ENCODE measurements at regions of chr11 and their contacts with region 1.

Region 1: DNA sequence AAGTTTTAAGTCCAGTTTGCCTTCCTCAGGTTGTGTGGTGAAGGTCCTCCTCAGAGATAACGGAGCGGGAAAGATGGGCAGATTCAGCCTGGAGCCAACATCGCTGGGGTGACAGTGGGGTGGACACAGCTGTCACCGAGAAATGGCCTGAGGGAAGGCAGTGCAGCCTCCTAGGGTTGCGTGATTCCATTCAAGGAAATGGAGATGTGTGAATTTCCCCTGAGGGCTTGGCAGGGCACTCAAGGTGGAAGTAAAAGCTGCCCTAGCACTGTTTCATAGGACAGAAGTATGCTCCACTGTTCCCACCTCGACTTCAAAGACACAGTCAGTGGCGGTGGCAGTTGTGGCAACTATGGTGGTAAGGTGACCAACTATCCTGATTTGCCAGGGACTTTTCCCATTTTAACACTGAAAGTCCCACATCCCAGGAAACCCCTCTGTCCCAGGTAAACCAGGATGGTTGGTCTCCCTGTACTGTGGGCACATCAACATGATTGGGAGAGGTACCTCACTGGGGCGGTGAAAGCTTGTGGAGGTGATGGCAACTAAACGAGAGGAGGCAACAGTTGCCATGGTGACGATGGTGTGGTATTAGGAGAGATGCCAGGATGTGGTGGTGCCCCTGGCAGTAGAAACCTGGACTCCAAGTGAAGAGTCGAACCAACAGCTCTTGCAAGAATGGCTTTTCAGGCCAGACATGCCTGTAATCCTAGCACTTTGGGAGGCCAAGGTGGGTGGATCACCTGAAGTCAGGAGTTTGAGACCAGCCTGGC is 15.2 kb upstream of the CAT start:
- H3K4me3 Mint-ChIP-seq: no peak overlapping the region
- H3K27ac Mint-ChIP-seq: peak overlapping the region; percentile 47
- H3K4me1 Mint-ChIP-seq: peaks cover 61% of the 10 kb centered on the region
- H3K27me3 Mint-ChIP-seq: no peaks in the 10 kb centered on the region

Region 2: DNA sequence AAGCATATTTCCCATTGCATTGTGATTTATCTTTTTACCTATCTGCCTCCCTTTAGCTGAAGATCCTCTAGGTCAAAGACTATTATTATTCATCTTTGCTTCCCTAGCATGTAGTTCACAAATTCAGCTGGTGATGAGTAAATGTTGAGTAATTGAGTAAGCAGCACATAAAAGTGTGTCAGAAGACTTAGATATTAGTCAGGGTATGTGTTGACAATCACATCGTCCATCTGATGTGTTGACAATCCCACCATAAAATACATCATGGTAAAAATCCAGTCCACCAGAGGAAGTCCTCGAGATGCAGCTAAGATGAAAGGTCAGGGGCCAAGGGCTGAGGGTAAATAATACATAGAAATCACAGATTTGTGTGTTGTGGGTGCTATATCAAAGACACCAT is 42.8 kb before region 1 on chr11:
- intact Hi-C with region 1: loop called (anchors 5 kb)
- H3K4me3 Mint-ChIP-seq: no peak overlapping the region
- H3K27ac Mint-ChIP-seq: no peak overlapping the region
- H3K4me1 Mint-ChIP-seq: no peaks in the 10 kb centered on the region
- H3K27me3 Mint-ChIP-seq: no peaks in the 10 kb centered on the region

Region 3: DNA sequence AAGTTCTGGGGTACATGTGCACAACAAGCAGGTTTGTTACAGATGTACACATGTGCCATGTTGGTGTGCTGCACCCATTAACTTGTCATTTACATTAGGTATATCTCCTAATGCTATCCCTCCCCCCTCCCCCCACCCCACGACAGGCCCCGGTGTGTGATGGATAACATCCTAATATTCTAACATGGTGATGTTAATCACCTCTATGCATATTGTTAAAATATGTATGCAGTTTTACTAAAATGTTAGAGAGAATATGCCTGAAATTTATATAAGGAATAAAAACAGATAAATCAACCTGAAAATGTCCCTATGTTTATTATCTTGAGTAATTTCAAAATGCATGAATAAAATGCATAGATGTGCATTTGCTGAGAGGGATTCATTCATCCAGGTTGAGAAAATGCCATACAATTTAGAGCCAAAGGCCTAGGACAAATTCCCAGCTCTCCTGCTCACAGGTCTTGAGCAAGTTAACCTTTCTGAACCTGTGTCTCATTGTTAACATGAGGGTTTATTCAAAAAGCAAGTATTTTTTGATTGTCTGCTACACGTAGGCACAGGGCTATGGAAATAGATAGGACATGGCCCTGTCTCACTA is 454.0 kb after region 1 on chr11:
- intact Hi-C with region 1: no loop called
- H3K4me3 Mint-ChIP-seq: no peak overlapping the region
- H3K27ac Mint-ChIP-seq: no peak overlapping the region
- H3K4me1 Mint-ChIP-seq: no peaks in the 10 kb centered on the region
- H3K27me3 Mint-ChIP-seq: no peaks in the 10 kb centered on the region